Spleen (tissue), 13 donors: ENCODE measurements at regions of chr21 and their contacts with region 1.

Region 1: GRCh38 chr21:32826329-32827167 is 55.0 kb upstream of the PAXBP1 start:
- DNase-seq: no peak
- H3K4me3 ChIP-seq: no peak overlapping the region
- H3K27ac ChIP-seq: no peak overlapping the region
- H3K4me1 ChIP-seq: no peaks in the 10 kb centered on the region
- H3K27me3 ChIP-seq: peaks cover 0 to 9% (median 0%) of the 10 kb centered on the region in 7 donors
- CTCF ChIP-seq: peak; percentile 10 to 72 (median 44)
- POLR2A ChIP-seq: no peak

Region 2: DNA sequence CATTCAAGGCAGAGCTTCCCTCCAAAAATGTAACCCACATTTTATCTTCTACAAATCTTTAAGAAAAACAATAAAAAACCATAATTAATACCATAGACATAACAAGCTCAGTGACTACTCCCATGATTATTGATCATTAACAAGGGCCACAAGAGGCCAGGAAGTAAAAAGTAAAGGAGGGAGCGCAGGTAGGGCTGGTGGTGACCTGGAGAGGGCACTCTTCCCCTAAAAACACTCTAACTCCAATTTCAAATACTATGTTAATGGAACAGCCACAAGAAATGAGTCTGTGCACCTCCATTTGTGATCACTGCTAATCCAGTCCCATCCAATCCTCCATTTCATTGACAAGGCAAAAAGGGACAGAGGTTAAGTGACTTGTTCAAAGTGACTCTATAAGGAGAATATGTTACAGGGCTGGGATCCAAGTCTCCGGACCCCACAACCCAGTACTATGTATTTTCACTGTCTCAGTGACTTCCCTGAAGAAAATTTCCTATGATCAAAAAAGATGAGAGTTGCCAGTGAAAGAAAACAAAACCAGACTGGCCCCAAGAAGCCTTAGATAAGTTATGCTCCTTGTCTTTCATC is 173.1 kb before region 1 on chr21:
- intact Hi-C with region 1: loop called (anchors 10 kb)
- DNase-seq: no peak
- H3K4me3 ChIP-seq: no peak overlapping the region
- H3K27ac ChIP-seq: no peak overlapping the region
- H3K4me1 ChIP-seq: no peaks in the 10 kb centered on the region
- H3K27me3 ChIP-seq: no peaks in the 10 kb centered on the region
- CTCF ChIP-seq: peak in 9 of 11 experiments; percentile 30 to 69 (median 58)
- POLR2A ChIP-seq: no peak

Region 3: DNA sequence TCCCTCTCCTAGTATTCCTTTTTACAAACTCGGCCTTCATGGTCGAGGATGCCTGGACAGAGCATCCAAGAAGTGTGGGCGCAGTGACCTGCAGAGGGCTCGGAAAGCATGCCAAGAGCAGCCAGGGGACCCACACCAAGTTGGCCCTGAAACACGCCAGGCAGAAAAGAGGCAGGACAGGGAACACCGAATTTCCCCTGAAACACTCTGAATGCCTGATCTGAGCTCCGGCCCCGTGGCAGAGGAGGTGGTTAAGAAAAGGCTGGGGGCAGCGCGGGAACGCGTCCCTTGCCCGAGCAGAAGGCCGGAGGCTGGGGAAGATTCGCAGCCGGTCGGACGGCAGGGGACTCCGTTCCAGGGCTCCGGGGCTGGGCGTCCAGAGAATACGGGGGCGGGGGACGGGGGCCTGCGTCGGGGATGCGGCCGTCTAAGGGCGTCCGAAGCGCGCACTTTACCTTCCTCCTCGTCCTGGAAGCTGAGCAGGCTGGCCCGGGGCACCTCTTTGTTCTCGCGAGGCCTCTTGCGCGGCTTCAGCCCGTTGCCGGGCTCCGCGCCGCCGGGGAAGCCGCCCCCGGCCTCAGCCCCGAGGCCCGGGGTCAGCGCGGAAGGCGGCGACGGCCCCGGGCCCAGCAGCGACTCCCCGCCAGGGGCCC is 55.6 kb before region 1 on chr21:
- intact Hi-C with region 1: no loop called
- DNase-seq: peak; percentile 93
- H3K4me3 ChIP-seq: peak overlapping the region; percentile 52 to 87 (median 76)
- H3K27ac ChIP-seq: peak overlapping the region; percentile 67 to 96 (median 93)
- H3K4me1 ChIP-seq: peaks cover 17 to 70% (median 43%) of the 10 kb centered on the region in 6 donors
- H3K27me3 ChIP-seq: peaks cover 0 to 4% (median 0%) of the 10 kb centered on the region in 7 donors
- CTCF ChIP-seq: no peak
- POLR2A ChIP-seq: no peak